ENCODE measurements at regions of chr22 and their contacts with region 1.

Region 1: GRCh38 chr22:39859903-39860588 is 33.5 kb downstream of the ENTHD1 start:
- DNase-seq: peak; percentile 73
- ATAC-seq: peak; percentile 91
- H3K4me3 ChIP-seq: peak overlapping the region; percentile 44; the same call in 1 of the 2 replicates
- H3K27ac ChIP-seq: peak overlapping the region; percentile 85
- H3K4me1 ChIP-seq: peaks cover 19% of the 10 kb centered on the region
- H3K27me3 ChIP-seq: no peaks in the 10 kb centered on the region
- CTCF ChIP-seq: no peak
- EP300 ChIP-seq: peak; percentile 42 to 50; a peak in 1 of 4 replicates
- POLR2A ChIP-seq: no peak
- RAD21 ChIP-seq: no peak

Region 2: GRCh38 chr22:39845529-39845928 is 14.5 kb before region 1 on chr22:
- CTCF ChIA-PET with region 1: interaction called, 3 read pairs
- POLR2A ChIA-PET with region 1: interaction called, 3 read pairs
- RAD21 ChIA-PET with region 1: interaction called, 3 read pairs
- SMC1A ChIA-PET with region 1: interaction called, 12 read pairs
- in situ Hi-C with region 1: no loop called
- intact Hi-C with region 1: no loop called
- DNase-seq: no peak
- ATAC-seq: no peak
- H3K4me3 ChIP-seq: no peak overlapping the region
- H3K27ac ChIP-seq: no peak overlapping the region
- H3K4me1 ChIP-seq: peaks cover 4% of the 10 kb centered on the region; the same call in 1 of the 2 replicates
- H3K27me3 ChIP-seq: no peaks in the 10 kb centered on the region
- CTCF ChIP-seq: no peak
- EP300 ChIP-seq: no peak
- POLR2A ChIP-seq: no peak
- RAD21 ChIP-seq: no peak

Region 3: DNA sequence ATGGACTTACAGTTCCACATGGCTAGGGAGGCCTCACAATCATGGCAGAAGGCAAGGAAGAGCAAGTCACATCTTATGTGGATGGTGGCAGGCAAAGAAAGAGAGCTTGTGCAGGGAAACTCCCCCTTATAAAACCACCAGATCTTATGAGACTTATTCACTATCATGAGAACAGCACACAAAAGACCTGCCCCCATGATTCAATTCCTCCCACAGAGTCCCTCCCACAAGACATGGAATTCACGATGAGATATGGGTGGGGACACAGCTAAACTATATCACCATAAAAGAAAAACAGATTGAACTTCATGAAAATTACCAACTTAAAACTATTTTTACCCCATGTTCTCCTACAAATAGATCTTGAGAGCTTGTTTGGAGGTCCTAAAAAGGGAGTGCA is 13.9 kb after region 1 on chr22:
- CTCF ChIA-PET with region 1: interaction called, 7 read pairs
- POLR2A ChIA-PET with region 1: interaction called, 3 read pairs
- RAD21 ChIA-PET with region 1: interaction called, 10 read pairs
- SMC1A ChIA-PET with region 1: interaction called, 14 read pairs
- in situ Hi-C with region 1: no loop called
- intact Hi-C with region 1: no loop called
- DNase-seq: no peak
- ATAC-seq: no peak
- H3K4me3 ChIP-seq: no peak overlapping the region
- H3K27ac ChIP-seq: no peak overlapping the region
- H3K4me1 ChIP-seq: peaks cover 10% of the 10 kb centered on the region
- H3K27me3 ChIP-seq: no peaks in the 10 kb centered on the region
- CTCF ChIP-seq: no peak
- EP300 ChIP-seq: no peak
- POLR2A ChIP-seq: no peak
- RAD21 ChIP-seq: no peak

Measured in GM12878 (cell line).